Activated CD4-positive, alpha-beta memory T cell treated with anti-CD3 and anti-CD28 coated beads, Interleukin-2, amount 10 ng/mL, durations not matched to agents 7 days and 5 days (primary cell): ENCODE measurements at regions of chr15 and their contacts with region 1.

Region 1: GRCh38 chr15:57146506-57147201 is 228.2 kb downstream of the TCF12 start:
- DNase-seq: no peak
- H3K4me3 Mint-ChIP-seq: no peak overlapping the region
- H3K27ac Mint-ChIP-seq: no peak overlapping the region
- H3K4me1 Mint-ChIP-seq: peaks cover 4% of the 10 kb centered on the region
- H3K27me3 Mint-ChIP-seq: no peaks in the 10 kb centered on the region

Region 2: DNA sequence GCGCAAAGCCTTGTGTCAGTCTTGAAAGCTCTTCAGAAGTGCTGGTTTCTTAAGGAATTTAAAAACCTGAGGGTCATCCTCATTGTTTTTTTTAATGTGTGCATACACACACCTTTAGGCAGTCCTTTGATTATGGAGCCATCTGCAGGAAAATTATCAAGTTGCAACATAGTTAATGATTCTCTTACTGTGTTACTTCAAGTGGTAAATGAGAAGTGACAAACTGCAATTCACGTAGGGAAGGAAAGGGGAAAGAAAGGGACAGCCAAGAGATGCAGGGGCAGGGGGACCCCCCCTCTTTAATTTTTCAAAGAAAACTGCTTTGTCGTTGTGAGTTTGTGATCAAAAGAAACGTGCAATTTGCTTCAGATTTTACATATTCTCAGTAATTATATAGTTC is 67.2 kb after region 1 on chr15:
- CTCF ChIA-PET with region 1: interaction called, 12 read pairs
- POLR2A ChIA-PET with region 1: no interaction called
- DNase-seq: no peak
- H3K4me3 Mint-ChIP-seq: no peak overlapping the region
- H3K27ac Mint-ChIP-seq: no peak overlapping the region
- H3K4me1 Mint-ChIP-seq: no peaks in the 10 kb centered on the region
- H3K27me3 Mint-ChIP-seq: no peaks in the 10 kb centered on the region

Region 3: DNA sequence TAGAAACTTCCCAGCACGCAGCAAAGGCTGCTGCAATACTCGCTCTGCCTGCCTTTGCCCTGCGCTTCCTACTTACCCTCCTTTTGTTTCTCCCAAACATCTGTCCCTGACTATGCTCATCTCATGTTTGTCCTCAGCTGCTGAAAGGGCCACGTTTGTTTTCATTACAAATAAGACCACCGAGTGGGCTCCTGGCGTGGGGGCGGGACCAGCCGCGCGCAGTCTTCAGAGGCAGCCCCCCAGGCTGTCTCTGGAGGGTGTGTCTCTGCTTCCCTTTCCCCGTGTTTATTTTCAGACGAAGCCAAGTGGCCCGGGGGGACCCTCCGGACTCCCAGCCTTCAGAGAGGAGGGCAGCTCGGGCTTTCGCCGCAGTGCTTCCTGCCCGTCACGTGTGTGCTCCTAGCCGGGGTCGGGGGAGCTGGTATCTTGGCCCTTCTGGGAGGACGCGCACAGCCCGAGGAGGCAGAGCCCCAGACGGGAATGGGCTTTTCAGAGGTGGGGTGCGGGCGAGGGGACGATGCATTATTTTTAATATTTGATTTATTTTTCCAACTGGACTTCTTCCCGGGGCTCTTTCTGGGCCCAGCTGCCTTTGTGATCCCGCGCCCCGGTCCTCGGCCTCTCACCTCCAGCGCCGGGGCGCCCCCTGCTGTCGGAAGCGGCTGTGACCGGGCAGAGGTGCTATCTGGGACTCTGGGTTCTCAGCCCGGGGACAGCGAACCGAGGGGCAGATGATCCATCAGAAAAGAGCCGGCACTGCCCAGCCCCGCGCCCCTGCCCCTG is 159.7 kb after region 1 on chr15:
- CTCF ChIA-PET with region 1: interaction called, 93 read pairs
- POLR2A ChIA-PET with region 1: interaction called, 5 read pairs
- DNase-seq: peak; percentile 81
- H3K4me3 Mint-ChIP-seq: peak overlapping the region; percentile 30
- H3K27ac Mint-ChIP-seq: no peak overlapping the region
- H3K4me1 Mint-ChIP-seq: peaks cover 3% of the 10 kb centered on the region
- H3K27me3 Mint-ChIP-seq: peaks cover 3% of the 10 kb centered on the region